Prostate gland (tissue), 2 donors: ENCODE measurements at regions of chr10 and their contacts with region 1.

Region 1: DNA sequence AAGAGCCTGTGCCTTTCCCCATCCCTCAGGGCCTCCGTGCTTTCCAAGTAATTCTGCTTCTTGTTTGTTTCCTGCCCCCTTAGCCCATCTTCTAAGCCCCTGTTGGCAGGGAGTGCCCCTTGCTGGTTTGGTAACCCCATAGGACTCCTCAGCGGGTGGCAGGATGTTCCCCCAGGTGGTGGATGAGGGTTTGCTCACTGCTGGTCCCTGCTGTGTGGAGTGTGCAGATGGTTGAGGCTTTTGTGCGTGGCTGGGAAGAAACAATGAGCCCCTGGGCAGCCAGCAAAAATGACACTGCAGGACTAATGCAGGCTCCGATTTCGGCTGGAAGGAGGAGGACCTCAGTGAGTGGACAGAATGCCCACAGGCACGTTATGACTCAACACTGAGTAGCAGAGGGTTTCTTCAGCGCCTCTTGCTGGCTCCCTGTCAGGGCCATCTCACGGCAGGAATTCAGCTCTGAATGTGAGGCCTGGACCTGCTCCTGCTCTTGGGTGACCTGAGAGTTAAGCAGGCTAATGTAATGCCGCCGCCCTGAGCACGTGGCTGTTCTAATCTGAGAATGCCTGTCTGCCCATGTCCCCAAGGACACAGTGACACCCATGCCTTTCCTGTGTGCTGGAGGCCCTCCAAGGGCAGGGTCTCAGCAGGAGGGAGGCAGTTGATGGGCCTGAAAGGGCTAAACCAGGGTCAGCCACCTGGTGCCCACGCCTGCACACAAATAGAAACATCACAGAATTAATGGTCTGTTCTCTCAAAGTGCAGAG is 16.6 kb downstream of the BAG3 start:
- DNase-seq: peak; percentile 50
- H3K4me3 ChIP-seq: no peak overlapping the region
- H3K27ac ChIP-seq: peak overlapping the region; percentile 18 to 58
- H3K4me1 ChIP-seq: peaks cover 15% of the 10 kb centered on the region
- H3K27me3 ChIP-seq: no peaks in the 10 kb centered on the region
- CTCF ChIP-seq: no peak
- POLR2A ChIP-seq: no peak

Region 2: DNA sequence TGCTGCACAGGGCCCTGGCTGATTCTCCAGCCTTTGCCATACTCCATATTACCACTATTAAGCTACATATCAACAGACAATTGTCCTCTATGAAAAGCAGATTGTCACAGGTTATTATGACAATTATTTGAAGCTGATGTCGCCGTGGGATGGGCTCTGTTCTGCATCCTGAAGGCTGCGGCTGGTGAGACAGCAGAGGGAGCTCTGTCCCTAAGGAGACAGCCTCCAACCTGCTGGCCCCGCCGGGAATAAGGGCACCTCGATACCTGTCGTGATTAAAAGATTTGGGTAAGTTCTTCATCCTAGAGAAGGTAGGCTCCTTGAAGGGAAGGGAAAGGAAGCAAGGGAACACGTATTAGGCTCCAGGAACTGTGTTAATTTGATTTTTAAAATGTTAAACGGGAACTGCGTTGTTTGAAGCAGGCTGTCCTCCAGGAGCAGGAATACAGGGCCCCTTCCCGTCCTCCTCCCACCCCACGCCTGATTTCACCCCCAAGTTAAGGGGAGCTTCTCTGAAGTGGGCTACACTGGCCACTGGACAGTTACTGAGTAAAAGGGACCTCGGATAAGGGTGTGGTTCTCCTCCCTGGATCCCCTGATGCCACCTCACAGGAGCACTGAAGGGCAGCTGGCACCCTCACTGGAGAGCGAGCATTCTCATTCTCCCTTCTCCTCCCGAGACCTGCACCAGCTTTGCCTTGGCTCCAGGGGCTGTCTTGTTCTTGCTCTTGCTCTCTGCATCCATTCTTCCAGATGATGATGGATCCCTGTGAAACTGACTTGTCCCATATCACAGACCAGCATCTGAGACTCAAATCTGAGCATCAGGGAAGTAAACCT is 59.2 kb before region 1 on chr10:
- intact Hi-C with region 1: loop called (anchors 5 kb)
- DNase-seq: peak; percentile 58
- H3K4me3 ChIP-seq: no peak overlapping the region
- H3K27ac ChIP-seq: no peak overlapping the region
- H3K4me1 ChIP-seq: no peaks in the 10 kb centered on the region
- H3K27me3 ChIP-seq: no peaks in the 10 kb centered on the region
- CTCF ChIP-seq: peak; percentile 18 to 77 (median 71)
- POLR2A ChIP-seq: no peak

Region 3: GRCh38 chr10:119826771-119827170 is 159.0 kb after region 1 on chr10:
- intact Hi-C with region 1: no loop called
- DNase-seq: no peak
- H3K4me3 ChIP-seq: no peak overlapping the region
- H3K27ac ChIP-seq: no peak overlapping the region
- H3K4me1 ChIP-seq: no peaks in the 10 kb centered on the region
- H3K27me3 ChIP-seq: no peaks in the 10 kb centered on the region
- CTCF ChIP-seq: no peak
- POLR2A ChIP-seq: no peak